Activated CD4-positive, alpha-beta T cell treated with anti-CD3 and anti-CD28 coated beads for 36 hours (primary cell): ENCODE measurements at regions of chr15 and their contacts with region 1.

Region 1: DNA sequence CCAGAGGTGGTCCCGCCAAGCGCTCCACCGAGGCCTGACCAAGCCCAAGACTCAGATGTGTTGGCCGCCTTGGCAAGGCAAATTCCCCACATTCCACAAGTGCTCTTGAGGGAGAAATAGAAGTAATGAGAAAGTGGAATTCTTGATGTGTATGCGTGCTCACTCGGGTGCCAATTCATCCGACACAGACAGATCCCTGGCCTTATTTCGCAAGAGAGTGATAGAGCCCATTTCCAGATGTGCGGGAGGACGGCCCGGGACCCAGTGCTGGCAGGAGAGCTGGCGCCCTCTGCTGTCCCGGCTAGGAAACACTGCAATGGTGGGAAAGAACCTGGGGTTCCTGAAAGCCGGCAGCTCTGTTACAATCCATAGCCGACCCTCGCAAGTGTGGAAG is 76.0 kb downstream of the HMG20A start:
- DNase-seq: peak; percentile 86
- ATAC-seq: peak; percentile 66
- H3K4me3 Mint-ChIP-seq: no peak overlapping the region
- H3K27ac Mint-ChIP-seq: no peak overlapping the region
- H3K4me1 Mint-ChIP-seq: peaks cover 17% of the 10 kb centered on the region
- H3K27me3 Mint-ChIP-seq: no peaks in the 10 kb centered on the region

Region 2: GRCh38 chr15:77040673-77041072 is 456.0 kb before region 1 on chr15:
- CTCF ChIA-PET with region 1: no interaction called
- POLR2A ChIA-PET with region 1: no interaction called
- intact Hi-C with region 1: no loop called
- DNase-seq: peak; percentile 17
- ATAC-seq: peak; percentile 21
- H3K4me3 Mint-ChIP-seq: no peak overlapping the region
- H3K27ac Mint-ChIP-seq: peak overlapping the region; percentile 19
- H3K4me1 Mint-ChIP-seq: peaks cover 2% of the 10 kb centered on the region
- H3K27me3 Mint-ChIP-seq: no peaks in the 10 kb centered on the region

Region 3: GRCh38 chr15:77107531-77108355 is 389.0 kb before region 1 on chr15:
- CTCF ChIA-PET with region 1: interaction called, 8 read pairs
- POLR2A ChIA-PET with region 1: no interaction called
- intact Hi-C with region 1: loop called in 1 of 2 experiments (anchors 2 kb)
- DNase-seq: peak; percentile 69
- ATAC-seq: peak; percentile 66
- H3K4me3 Mint-ChIP-seq: no peak overlapping the region
- H3K27ac Mint-ChIP-seq: no peak overlapping the region
- H3K4me1 Mint-ChIP-seq: no peaks in the 10 kb centered on the region
- H3K27me3 Mint-ChIP-seq: no peaks in the 10 kb centered on the region

Region 4: DNA sequence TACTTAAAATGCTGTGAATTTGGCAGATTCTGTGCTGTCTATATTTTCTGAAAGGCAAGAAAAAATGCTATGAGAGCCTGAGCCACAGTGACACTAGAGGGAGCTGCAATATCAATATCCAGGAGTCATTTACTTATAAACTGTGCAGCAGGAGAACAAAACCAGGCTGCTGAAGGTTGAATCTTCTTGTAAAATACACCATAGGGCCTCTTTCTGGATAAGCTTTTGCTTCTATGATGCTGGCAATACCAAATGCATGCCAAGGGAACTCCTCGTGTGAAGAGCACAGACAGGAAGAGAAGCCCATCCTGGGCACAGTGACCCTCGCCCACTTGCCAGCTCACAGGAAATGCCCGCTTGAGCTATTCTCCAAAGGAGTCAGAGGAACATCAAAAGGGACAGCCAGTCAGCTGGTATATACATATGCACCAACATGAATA is 377.8 kb before region 1 on chr15:
- CTCF ChIA-PET with region 1: interaction called, 27 read pairs
- POLR2A ChIA-PET with region 1: no interaction called
- intact Hi-C with region 1: loop called (anchors 1 to 2 kb)
- DNase-seq: peak; percentile 39
- ATAC-seq: peak; percentile 47
- H3K4me3 Mint-ChIP-seq: no peak overlapping the region
- H3K27ac Mint-ChIP-seq: no peak overlapping the region
- H3K4me1 Mint-ChIP-seq: peaks cover 7% of the 10 kb centered on the region
- H3K27me3 Mint-ChIP-seq: no peaks in the 10 kb centered on the region

Region 5: GRCh38 chr15:77126529-77127326 is 370.0 kb before region 1 on chr15:
- CTCF ChIA-PET with region 1: interaction called, 10 read pairs
- POLR2A ChIA-PET with region 1: no interaction called
- intact Hi-C with region 1: no loop called
- DNase-seq: no peak
- ATAC-seq: no peak
- H3K4me3 Mint-ChIP-seq: no peak overlapping the region
- H3K27ac Mint-ChIP-seq: no peak overlapping the region
- H3K4me1 Mint-ChIP-seq: peaks cover 3% of the 10 kb centered on the region
- H3K27me3 Mint-ChIP-seq: no peaks in the 10 kb centered on the region

Region 6: DNA sequence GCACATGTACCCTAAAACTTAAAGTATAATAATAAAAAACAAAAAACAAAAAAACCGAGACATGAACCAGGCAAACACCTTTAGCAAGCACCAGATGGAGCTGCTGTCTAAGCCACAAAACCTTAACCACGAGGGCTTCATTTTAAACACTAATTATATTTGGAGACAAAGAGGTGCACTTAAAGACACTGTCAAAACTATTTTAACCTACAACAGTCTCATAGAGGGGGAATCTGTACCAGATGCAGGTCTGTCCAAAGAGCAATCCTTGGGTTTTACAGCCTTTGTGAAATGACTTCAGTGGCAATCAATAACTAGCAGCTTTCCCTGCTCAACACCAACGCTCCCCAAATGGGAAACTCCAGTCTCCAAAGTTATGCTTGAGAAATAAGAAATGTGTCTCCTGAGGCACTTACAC is 310.1 kb before region 1 on chr15:
- CTCF ChIA-PET with region 1: interaction called, 26 read pairs
- POLR2A ChIA-PET with region 1: no interaction called
- intact Hi-C with region 1: loop called (anchors 1 kb)
- DNase-seq: peak; percentile 30
- ATAC-seq: no peak
- H3K4me3 Mint-ChIP-seq: no peak overlapping the region
- H3K27ac Mint-ChIP-seq: no peak overlapping the region
- H3K4me1 Mint-ChIP-seq: peaks cover 55% of the 10 kb centered on the region
- H3K27me3 Mint-ChIP-seq: no peaks in the 10 kb centered on the region

Region 7: GRCh38 chr15:77329202-77329601 is 167.5 kb before region 1 on chr15:
- CTCF ChIA-PET with region 1: no interaction called
- POLR2A ChIA-PET with region 1: no interaction called
- intact Hi-C with region 1: no loop called
- DNase-seq: no peak
- ATAC-seq: no peak
- H3K4me3 Mint-ChIP-seq: no peak overlapping the region
- H3K27ac Mint-ChIP-seq: no peak overlapping the region
- H3K4me1 Mint-ChIP-seq: no peaks in the 10 kb centered on the region
- H3K27me3 Mint-ChIP-seq: no peaks in the 10 kb centered on the region

Region 8: GRCh38 chr15:77584201-77584600 is 87.5 kb after region 1 on chr15:
- CTCF ChIA-PET with region 1: no interaction called
- POLR2A ChIA-PET with region 1: no interaction called
- intact Hi-C with region 1: no loop called
- DNase-seq: no peak
- ATAC-seq: no peak
- H3K4me3 Mint-ChIP-seq: no peak overlapping the region
- H3K27ac Mint-ChIP-seq: no peak overlapping the region
- H3K4me1 Mint-ChIP-seq: no peaks in the 10 kb centered on the region
- H3K27me3 Mint-ChIP-seq: no peaks in the 10 kb centered on the region